ENCODE measurements at regions of chr17 and their contacts with region 1.

Region 1: DNA sequence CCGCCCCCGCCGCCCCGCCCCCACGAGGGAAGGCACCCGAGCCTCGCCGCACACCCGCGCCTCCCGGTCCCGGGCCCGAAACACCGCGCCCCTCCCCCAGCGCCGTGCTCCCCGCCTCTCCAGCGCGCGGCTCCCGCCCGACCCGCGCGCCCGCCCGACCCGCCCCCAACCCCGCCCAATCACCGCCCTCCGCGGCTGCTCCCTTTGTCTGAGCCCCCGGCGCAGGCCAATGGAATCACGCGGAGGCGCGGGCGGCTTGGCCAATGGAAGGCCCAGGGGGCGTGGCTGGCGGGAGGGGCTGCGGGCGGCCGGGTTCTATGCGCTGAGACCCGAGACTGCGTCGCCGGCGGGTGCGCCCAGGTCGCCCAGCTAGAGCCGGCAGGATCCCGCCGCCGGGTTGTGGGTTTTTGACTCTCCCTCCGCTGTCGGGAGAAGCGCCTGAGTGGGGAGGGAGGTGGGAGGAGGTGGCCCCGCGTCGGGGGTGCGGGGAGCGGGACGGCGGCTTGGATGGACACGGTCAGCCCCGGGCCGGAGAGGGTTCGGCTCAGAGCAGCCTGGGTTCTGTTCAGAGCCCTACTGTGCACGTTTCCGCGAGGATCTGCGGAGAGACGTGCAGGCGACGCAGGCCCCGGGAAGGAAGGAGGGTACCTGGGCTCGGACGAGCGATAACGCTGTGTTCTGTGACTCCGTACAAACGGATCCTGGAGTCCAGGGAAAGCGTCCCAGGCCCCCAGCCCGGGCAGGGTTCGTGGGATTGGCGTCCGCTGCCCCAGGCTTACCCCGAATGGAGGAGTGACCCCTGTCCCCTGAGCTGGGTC is 49.0 kb upstream of the BAHCC1 start:
- DNase-seq: peak; percentile 93
- ATAC-seq: peak; percentile 78
- H3K4me3 ChIP-seq: peak overlapping the region; percentile 77 to 100
- H3K27ac ChIP-seq: peak overlapping the region; percentile 67
- H3K4me1 ChIP-seq: peaks cover 38 to 64% of the 10 kb centered on the region in 2 experiments
- H3K27me3 ChIP-seq: no peaks in the 10 kb centered on the region
- CTCF ChIP-seq: no peak
- POLR2A ChIP-seq: peak; percentile 45
- RAD21 ChIP-seq: no peak

Region 2: DNA sequence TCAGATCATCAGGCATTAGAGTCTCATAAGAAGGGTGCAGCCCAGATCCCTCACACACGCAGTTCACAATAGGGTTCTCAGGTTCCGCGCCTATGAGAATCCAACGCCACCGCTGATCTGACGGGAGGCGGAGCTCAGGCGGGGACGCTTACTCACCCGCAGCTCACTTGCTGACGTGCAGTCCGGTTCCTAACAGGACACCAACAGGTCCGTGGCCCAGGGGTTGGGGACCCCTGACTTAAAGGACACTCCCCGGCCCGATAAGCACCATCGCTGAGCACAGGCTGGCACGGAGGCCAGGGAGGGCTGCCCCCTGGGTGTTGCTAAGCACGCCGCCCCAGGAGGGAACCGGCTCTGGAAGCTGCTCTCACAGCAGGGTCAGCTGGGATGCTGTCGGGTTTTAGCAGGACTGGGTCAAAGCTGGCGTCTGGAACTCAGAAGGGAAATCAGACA is 18.9 kb after region 1 on chr17:
- CTCF ChIA-PET with region 1: interaction called, 3 read pairs
- POLR2A ChIA-PET with region 1: interaction called, 19 read pairs
- RAD21 ChIA-PET with region 1: no interaction called
- intact Hi-C with region 1: loop called (anchors 2 kb)
- DNase-seq: peak; percentile 72
- ATAC-seq: peak; percentile 87
- H3K4me3 ChIP-seq: peak overlapping the region; percentile 47 to 61
- H3K27ac ChIP-seq: peak overlapping the region; percentile 68
- H3K4me1 ChIP-seq: peaks cover 45 to 51% of the 10 kb centered on the region in 2 experiments
- H3K27me3 ChIP-seq: peaks cover 4% of the 10 kb centered on the region; the same call in 1 of the 2 replicates
- CTCF ChIP-seq: no peak
- POLR2A ChIP-seq: peak; percentile 1
- RAD21 ChIP-seq: no peak

Region 3: GRCh38 chr17:81379523-81379942 is 33.2 kb after region 1 on chr17:
- CTCF ChIA-PET with region 1: no interaction called
- POLR2A ChIA-PET with region 1: interaction called, 11 read pairs
- RAD21 ChIA-PET with region 1: no interaction called
- intact Hi-C with region 1: no loop called
- DNase-seq: peak; percentile 81
- ATAC-seq: peak; percentile 98
- H3K4me3 ChIP-seq: peak overlapping the region; percentile 47 to 62
- H3K27ac ChIP-seq: peak overlapping the region; percentile 56
- H3K4me1 ChIP-seq: peaks cover 10 to 19% of the 10 kb centered on the region in 2 experiments
- H3K27me3 ChIP-seq: no peaks in the 10 kb centered on the region
- CTCF ChIP-seq: peak in 1 of 3 experiments; percentile 10; a peak in 1 of 6 replicates
- POLR2A ChIP-seq: peak; percentile 78
- RAD21 ChIP-seq: no peak

Measured in HCT116 (cell line).